ENCODE measurements at regions of chr22 and their contacts with region 1.

Region 1: DNA sequence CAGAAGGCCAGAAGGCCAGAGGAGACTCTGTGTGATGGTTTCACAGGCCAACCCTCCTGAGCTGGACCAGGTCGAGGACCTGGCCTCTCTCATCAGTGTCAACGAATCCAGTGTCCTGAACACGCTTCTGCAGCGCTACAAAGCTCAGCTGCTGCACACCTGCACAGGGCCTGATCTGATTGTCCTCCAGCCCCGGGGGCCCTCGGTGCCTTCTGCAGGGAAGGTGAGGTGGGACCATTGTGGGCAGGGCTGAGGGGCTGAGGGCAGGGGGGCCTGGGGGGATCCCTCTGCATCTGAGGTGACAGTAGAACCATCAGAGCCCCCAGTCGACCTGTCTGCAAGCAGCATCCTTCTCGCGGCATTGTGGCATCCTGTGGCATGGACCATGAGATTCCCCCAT is 30.3 kb downstream of the MYO18B start:
- DNase-seq: no peak
- ATAC-seq: no peak
- H3K4me3 ChIP-seq: no peak overlapping the region
- H3K27ac ChIP-seq: no peak overlapping the region
- H3K4me1 ChIP-seq: no peaks in the 10 kb centered on the region
- H3K27me3 ChIP-seq: no peaks in the 10 kb centered on the region
- CTCF ChIP-seq: no peak
- POLR2A ChIP-seq: no peak
- RAD21 ChIP-seq: no peak

Region 2: GRCh38 chr22:25567251-25567675 is 205.0 kb before region 1 on chr22:
- CTCF ChIA-PET with region 1: interaction called, 3 read pairs
- POLR2A ChIA-PET with region 1: no interaction called
- RAD21 ChIA-PET with region 1: no interaction called
- intact Hi-C with region 1: loop called (anchors 2 kb)
- DNase-seq: no peak
- ATAC-seq: no peak
- H3K4me3 ChIP-seq: no peak overlapping the region
- H3K27ac ChIP-seq: no peak overlapping the region
- H3K4me1 ChIP-seq: peaks cover 9 to 24% of the 10 kb centered on the region in 2 experiments; a peak in 3 of 4 replicates
- H3K27me3 ChIP-seq: no peaks in the 10 kb centered on the region
- CTCF ChIP-seq: peak; percentile 12 to 30 (median 24); a peak in 1 of 6 replicates
- POLR2A ChIP-seq: no peak
- RAD21 ChIP-seq: peak; percentile 48; the same call in 1 of the 2 replicates

Region 3: DNA sequence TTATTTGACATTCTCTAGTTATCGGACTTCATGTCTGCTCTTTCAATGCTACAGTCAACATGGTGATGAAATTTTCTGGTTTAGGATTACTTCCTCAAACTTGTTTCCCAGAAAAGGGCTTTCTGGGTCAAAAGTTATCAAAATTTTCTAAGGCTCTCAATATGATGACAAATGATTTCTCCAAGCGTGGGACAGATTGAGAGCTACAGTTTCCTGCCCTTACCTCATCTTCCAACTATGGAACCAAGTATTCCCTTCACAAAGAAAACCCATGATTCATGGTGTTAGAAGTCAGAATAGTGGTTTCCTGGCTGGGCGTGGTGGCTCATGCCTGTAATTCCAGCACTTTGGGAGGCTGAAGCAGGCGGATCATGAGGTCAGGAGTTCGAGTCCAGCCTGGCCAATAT is 12.5 kb before region 1 on chr22:
- CTCF ChIA-PET with region 1: interaction called, 13 read pairs
- POLR2A ChIA-PET with region 1: interaction called, 3 read pairs
- RAD21 ChIA-PET with region 1: no interaction called
- intact Hi-C with region 1: no loop called
- DNase-seq: no peak
- ATAC-seq: peak; percentile 77; the same call in 1 of the 2 replicates
- H3K4me3 ChIP-seq: no peak overlapping the region
- H3K27ac ChIP-seq: no peak overlapping the region
- H3K4me1 ChIP-seq: peaks cover 8 to 14% of the 10 kb centered on the region in 2 experiments; a peak in 3 of 4 replicates
- H3K27me3 ChIP-seq: no peaks in the 10 kb centered on the region
- CTCF ChIP-seq: no peak
- POLR2A ChIP-seq: no peak
- RAD21 ChIP-seq: no peak

Measured in HCT116 (cell line).